Naive thymus-derived CD8-positive, alpha-beta T cell (primary cell): ENCODE measurements at regions of chr4 and their contacts with region 1.

Region 1: GRCh38 chr4:38654273-38654672 is 9.7 kb upstream of the KLF3 start:
- DNase-seq: peak; percentile 30 to 90 (median 72)
- ATAC-seq: peak; percentile 72 to 76
- H3K4me3 Mint-ChIP-seq: peak overlapping the region; percentile 63 to 92 (median 85)
- H3K27ac Mint-ChIP-seq: peak overlapping the region; percentile 91 to 100 (median 100)
- H3K4me1 Mint-ChIP-seq: peaks cover 31 to 62% (median 58%) of the 10 kb centered on the region in 4 donors
- H3K27me3 Mint-ChIP-seq: no peaks in the 10 kb centered on the region

Region 2: DNA sequence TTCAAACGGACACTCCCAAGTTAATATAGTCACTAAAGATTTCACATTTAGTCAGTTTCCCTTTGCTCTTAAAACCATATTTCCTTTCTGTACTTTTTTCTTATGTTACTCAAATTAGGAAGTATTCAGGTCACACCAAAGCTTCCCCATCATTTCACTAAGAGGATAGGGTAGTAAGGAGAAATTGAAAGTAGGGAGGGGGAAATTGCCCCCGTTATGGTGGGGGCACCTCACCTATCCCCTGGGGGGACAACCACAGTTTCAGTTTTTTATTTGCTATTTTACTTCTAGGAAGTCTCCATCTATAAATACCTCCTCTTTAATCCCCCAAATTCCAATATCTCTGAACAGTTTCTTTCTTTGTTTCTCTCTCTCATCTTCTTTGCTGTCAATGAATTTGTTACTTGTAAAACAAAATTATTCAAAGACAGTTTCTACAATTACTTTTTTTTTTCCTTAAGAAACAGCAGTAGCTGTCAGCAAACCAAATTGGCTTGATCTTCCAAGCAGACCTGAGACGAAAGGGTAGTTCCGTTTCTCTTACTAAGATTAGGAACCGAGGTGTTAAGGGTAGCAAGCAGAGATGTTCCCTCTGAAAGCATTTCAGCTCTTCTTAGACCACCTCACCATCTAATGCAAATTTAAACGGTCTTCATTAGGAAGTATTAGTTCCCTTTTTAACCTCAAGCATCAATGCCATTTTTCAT is 150.4 kb before region 1 on chr4:
- POLR2A ChIA-PET with region 1: interaction called, 11 read pairs
- DNase-seq: no peak
- ATAC-seq: no peak
- H3K4me3 Mint-ChIP-seq: peak overlapping the region in 1 of 10 donors; percentile 62
- H3K27ac Mint-ChIP-seq: peak overlapping the region in 3 of 10 donors; percentile 34 to 51 (median 44)
- H3K4me1 Mint-ChIP-seq: peaks cover 29 to 55% (median 46%) of the 10 kb centered on the region in 4 donors
- H3K27me3 Mint-ChIP-seq: no peaks in the 10 kb centered on the region

Region 3: DNA sequence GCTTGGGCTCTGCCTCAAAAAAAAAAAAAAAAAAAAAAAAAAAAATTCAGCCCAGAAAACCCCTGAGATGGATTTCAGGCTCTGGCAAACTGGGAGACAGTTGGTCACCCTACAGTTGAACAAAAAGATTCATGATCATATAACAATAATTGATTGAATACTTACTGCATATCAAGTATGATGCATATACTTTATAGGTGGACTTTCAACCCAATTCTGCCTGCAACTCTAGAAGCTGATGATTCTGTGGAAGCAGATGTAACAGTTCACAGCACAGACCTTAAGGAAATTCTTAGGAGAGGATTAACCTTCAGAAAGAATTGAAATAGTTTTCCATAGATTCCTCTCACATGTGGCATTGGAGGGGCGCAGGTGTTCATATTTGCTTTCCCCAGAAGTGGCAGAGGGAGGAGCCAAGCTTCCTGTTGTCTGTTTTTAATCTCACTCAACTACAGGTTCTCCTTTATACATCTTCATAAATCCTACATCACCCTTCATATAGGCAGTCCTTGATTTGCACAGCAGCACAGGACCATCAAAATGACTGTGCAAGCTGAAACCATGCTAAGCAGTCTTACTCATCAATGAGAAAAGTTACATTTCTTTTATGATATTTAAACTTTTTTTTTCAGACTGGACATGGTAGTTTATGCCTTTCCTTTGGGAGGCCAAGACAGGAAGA is 139.7 kb before region 1 on chr4:
- POLR2A ChIA-PET with region 1: interaction called, 27 read pairs
- DNase-seq: peak in 1 of 10 donors; percentile 19
- ATAC-seq: peak; percentile 39 to 41
- H3K4me3 Mint-ChIP-seq: peak overlapping the region; percentile 57 to 81 (median 70)
- H3K27ac Mint-ChIP-seq: peak overlapping the region in 9 of 10 donors; percentile 44 to 88 (median 84)
- H3K4me1 Mint-ChIP-seq: peaks cover 48 to 83% (median 76%) of the 10 kb centered on the region in 4 donors
- H3K27me3 Mint-ChIP-seq: no peaks in the 10 kb centered on the region

Region 4: GRCh38 chr4:38625508-38625907 is 28.8 kb before region 1 on chr4:
- POLR2A ChIA-PET with region 1: interaction called, 14 read pairs
- DNase-seq: peak in 3 of 10 donors; percentile 10 to 41 (median 29)
- ATAC-seq: peak; percentile 79 to 80
- H3K4me3 Mint-ChIP-seq: peak overlapping the region in 3 of 10 donors; percentile 18 to 45 (median 22)
- H3K27ac Mint-ChIP-seq: peak overlapping the region in 6 of 10 donors; percentile 2 to 72 (median 50)
- H3K4me1 Mint-ChIP-seq: peaks cover 11 to 23% (median 15%) of the 10 kb centered on the region in 4 donors
- H3K27me3 Mint-ChIP-seq: no peaks in the 10 kb centered on the region

Region 5: GRCh38 chr4:38675146-38676121 is 21.2 kb after region 1 on chr4:
- POLR2A ChIA-PET with region 1: interaction called, 181 read pairs
- DNase-seq: peak; percentile 66 to 89 (median 82)
- ATAC-seq: peak; percentile 50 to 57
- H3K4me3 Mint-ChIP-seq: peak overlapping the region; percentile 20 to 91 (median 82)
- H3K27ac Mint-ChIP-seq: peak overlapping the region; percentile 89 to 99 (median 94)
- H3K4me1 Mint-ChIP-seq: peaks cover 68 to 94% (median 89%) of the 10 kb centered on the region in 4 donors
- H3K27me3 Mint-ChIP-seq: no peaks in the 10 kb centered on the region